ENCODE measurements at regions of chr3 and their contacts with region 1.

Region 1: DNA sequence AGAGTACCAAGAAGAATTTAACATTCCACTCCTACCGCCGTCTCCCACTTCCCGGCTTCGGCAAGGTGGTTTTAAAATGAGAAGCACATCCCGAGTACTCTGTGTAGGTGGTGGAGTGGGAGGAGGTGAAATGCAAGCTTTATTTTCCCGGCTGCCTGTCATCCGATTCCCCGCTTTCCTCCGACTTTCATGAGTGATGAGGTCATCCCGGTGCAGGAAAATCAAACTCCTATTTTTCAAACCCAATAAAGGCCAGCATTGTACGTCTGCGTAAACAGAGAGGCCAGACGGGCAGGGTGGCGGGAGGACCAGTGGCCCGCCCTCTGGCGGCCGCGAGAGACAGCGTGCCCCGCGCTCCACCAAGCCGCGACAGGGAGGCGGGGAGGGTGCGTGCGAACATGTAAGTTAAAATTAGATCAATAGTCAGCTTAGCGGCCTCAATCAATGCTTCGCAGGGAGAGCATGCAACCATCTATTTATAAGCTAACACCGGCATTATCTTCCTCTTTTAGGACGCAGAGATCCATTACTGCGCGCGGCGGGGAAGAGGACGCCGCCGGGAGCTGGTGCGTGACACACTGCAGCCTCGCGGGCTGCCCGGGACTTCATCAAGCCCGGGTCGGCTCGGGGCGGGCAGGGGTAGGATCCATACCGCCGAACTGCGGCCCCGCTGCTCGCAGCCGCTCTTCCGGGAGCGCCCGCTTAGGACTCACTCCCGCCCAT is 163.3 kb downstream of the CD47 start:
- DNase-seq: peak; percentile 81
- H3K4me3 Mint-ChIP-seq: peak overlapping the region; percentile 72
- H3K27ac Mint-ChIP-seq: no peak overlapping the region
- H3K4me1 Mint-ChIP-seq: peaks cover 10% of the 10 kb centered on the region
- H3K27me3 Mint-ChIP-seq: peaks cover 5% of the 10 kb centered on the region

Region 2: DNA sequence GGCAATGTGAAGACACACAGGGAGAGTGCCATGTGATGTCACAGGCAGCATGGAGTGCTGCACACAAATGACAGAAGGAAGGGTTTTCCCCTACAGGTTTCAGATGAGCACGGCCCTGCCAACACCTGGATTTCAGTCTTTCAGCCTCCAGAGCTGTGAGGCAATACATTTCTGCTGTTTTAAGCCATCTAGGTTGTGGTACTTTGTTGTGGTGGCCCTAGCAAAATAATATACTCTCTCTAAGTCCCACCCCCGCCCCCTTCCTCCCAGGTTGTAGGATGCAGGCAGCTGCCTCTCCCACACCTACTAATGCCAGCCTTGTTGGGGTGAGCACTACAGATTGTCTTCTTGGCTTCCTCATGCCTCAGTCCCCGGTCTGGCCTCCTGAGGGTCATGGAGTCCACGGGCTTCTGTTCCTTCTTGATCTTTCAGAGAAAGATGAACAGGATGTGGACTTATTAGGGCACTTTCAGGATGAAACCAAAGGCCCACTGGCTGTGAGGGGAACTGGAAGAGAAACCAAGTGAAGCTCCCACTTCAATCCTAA is 16.7 kb before region 1 on chr3:
- CTCF ChIA-PET with region 1: interaction called, 15 read pairs
- POLR2A ChIA-PET with region 1: no interaction called
- intact Hi-C with region 1: no loop called
- DNase-seq: peak; percentile 61
- H3K4me3 Mint-ChIP-seq: no peak overlapping the region
- H3K27ac Mint-ChIP-seq: no peak overlapping the region
- H3K4me1 Mint-ChIP-seq: peaks cover 15% of the 10 kb centered on the region
- H3K27me3 Mint-ChIP-seq: peaks cover 2% of the 10 kb centered on the region

Region 3: GRCh38 chr3:107951126-107951525 is 23.6 kb after region 1 on chr3:
- CTCF ChIA-PET with region 1: interaction called, 10 read pairs
- POLR2A ChIA-PET with region 1: no interaction called
- intact Hi-C with region 1: no loop called
- DNase-seq: no peak
- H3K4me3 Mint-ChIP-seq: no peak overlapping the region
- H3K27ac Mint-ChIP-seq: no peak overlapping the region
- H3K4me1 Mint-ChIP-seq: peaks cover 22% of the 10 kb centered on the region
- H3K27me3 Mint-ChIP-seq: no peaks in the 10 kb centered on the region

Region 4: DNA sequence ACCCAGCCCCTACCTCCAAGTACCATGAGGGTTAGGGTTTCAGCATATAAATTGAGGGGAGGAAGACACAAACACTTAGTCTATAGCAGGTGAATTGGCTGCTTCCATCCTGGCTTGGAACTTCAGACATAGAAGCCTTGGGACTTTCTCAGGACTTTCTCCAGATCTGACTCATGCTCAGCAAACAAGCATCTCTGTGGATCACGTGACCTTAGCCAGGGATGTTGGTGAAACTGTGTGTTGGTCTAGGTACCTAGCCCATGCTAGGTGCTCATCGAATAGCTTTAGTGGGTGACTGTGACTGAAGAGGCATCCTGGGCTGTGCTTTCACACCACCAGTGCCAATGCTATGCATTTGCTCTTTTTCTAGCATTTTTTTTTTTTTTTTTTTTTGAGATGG is 104.4 kb after region 1 on chr3:
- CTCF ChIA-PET with region 1: no interaction called
- POLR2A ChIA-PET with region 1: no interaction called
- intact Hi-C with region 1: no loop called
- DNase-seq: no peak
- H3K4me3 Mint-ChIP-seq: no peak overlapping the region
- H3K27ac Mint-ChIP-seq: no peak overlapping the region
- H3K4me1 Mint-ChIP-seq: peaks cover 8% of the 10 kb centered on the region
- H3K27me3 Mint-ChIP-seq: no peaks in the 10 kb centered on the region

Region 5: DNA sequence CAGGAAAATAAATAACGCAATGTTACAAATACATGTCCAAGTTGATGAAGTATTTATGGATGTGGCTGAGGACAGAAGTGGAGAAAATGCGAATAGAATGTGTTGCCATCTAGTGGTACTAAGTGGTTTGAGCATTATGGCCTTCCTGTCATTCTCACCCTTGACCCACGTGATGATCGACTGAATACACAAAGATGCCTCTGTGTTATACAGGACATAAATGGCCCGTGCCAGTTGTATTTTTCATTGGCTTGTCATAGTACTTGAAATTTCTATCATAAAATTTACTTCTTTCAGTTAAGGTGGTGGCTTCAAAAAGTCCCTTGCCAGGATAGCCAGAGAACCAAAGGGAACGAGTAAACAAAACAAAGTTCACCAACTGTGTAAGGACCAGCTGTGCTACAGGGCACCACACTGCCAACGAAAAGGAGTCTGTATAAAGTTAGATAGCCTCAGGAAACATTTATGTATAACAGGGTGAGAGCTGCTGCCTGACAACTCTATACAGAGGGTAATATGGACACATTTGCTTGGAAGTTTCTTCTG is 479.2 kb after region 1 on chr3:
- CTCF ChIA-PET with region 1: no interaction called
- POLR2A ChIA-PET with region 1: no interaction called
- intact Hi-C with region 1: loop called (anchors 5 kb)
- DNase-seq: no peak
- H3K4me3 Mint-ChIP-seq: no peak overlapping the region
- H3K27ac Mint-ChIP-seq: no peak overlapping the region
- H3K4me1 Mint-ChIP-seq: no peaks in the 10 kb centered on the region
- H3K27me3 Mint-ChIP-seq: no peaks in the 10 kb centered on the region

Region 6: DNA sequence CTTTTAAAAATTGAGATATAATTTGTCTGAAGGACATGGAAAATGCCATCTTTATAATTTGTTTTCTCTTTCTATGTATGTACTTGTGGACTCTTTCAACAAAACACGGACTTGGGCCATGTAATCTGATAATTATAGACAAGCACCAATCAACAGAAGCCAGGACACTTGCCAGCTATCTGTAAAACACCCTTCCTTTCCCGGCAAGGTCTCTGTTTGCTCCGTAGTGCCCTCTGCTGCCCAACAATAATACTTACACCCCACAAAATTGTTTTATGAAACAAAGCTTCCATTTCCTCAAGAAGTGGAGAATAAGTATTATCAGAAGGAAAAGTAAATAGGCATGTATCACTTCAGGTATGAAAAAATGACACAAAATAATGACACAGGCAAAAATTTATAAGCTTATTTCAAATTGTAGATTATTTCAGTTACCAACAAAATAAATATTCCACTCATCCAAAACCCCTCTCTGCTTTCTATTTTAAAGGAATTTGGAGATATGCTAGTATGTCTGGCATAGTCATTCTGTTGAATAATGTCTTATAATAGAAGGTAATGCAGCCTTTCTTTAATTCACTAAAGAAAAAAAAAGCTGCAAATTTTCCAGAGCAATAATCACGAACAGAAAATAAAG is 550.1 kb after region 1 on chr3:
- CTCF ChIA-PET with region 1: interaction called, 10 read pairs
- POLR2A ChIA-PET with region 1: no interaction called
- intact Hi-C with region 1: no loop called
- DNase-seq: peak; percentile 67
- H3K4me3 Mint-ChIP-seq: no peak overlapping the region
- H3K27ac Mint-ChIP-seq: no peak overlapping the region
- H3K4me1 Mint-ChIP-seq: peaks cover 3% of the 10 kb centered on the region
- H3K27me3 Mint-ChIP-seq: peaks cover 1% of the 10 kb centered on the region